ENCODE measurements at regions of chr1 and their contacts with region 1.

Region 1: GRCh38 chr1:198234520-198235251 is 77.9 kb downstream of the NEK7 start:
- DNase-seq: peak; percentile 62
- H3K4me3 Mint-ChIP-seq: peak overlapping the region; percentile 70
- H3K27ac Mint-ChIP-seq: no peak overlapping the region
- H3K4me1 Mint-ChIP-seq: peaks cover 29% of the 10 kb centered on the region
- H3K27me3 Mint-ChIP-seq: no peaks in the 10 kb centered on the region
- CTCF ChIP-seq: no peak

Region 2: GRCh38 chr1:197984289-197984688 is 250.4 kb before region 1 on chr1:
- CTCF ChIA-PET with region 1: no interaction called
- POLR2A ChIA-PET with region 1: no interaction called
- intact Hi-C with region 1: no loop called
- DNase-seq: no peak
- H3K4me3 Mint-ChIP-seq: no peak overlapping the region
- H3K27ac Mint-ChIP-seq: no peak overlapping the region
- H3K4me1 Mint-ChIP-seq: no peaks in the 10 kb centered on the region
- H3K27me3 Mint-ChIP-seq: no peaks in the 10 kb centered on the region
- CTCF ChIP-seq: no peak

Region 3: DNA sequence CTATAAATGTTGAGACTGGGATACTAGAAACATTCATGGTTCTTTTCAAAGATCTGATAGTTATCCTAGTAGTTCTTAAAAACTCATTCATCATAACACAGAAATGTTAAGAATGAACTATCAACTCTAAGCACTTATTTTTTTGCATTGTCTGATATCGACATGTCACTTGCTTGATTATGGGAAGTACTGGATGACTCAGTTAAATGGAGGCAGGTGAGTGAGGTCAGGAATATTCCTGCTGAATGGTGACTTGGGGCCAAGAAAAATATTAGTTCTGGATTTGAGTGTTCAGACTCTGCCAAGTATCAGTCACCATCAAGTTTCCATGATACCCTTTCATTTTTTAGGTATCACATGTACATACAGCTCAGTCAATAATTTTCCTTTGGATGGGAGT is 14.3 kb before region 1 on chr1:
- CTCF ChIA-PET with region 1: interaction called, 3 read pairs
- POLR2A ChIA-PET with region 1: interaction called, 26 read pairs
- intact Hi-C with region 1: no loop called
- DNase-seq: peak; percentile 97
- H3K4me3 Mint-ChIP-seq: peak overlapping the region; percentile 15
- H3K27ac Mint-ChIP-seq: peak overlapping the region; percentile 79
- H3K4me1 Mint-ChIP-seq: peaks cover 28% of the 10 kb centered on the region
- H3K27me3 Mint-ChIP-seq: no peaks in the 10 kb centered on the region
- CTCF ChIP-seq: no peak

Region 4: DNA sequence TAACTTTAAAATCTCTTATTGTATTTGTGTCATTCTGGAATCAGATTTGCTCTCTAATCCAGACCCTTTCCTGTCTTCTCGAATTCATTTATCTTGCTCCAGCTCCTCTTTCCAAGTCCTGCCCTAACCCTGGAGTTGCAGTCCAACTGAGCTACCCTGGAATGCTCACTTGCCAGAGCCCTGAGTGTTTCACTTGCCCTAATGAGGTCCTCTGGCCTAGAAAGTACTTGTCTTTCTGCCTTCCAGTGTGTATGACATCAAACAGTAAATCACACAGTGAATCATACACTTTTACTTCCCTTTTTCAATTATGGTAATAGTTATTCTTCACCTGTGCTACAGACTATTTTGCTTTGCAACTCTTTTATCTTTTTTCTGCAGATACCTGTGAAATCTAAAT is 19.0 kb after region 1 on chr1:
- CTCF ChIA-PET with region 1: interaction called, 4 read pairs
- POLR2A ChIA-PET with region 1: interaction called, 12 read pairs
- intact Hi-C with region 1: no loop called
- DNase-seq: peak; percentile 46
- H3K4me3 Mint-ChIP-seq: peak overlapping the region; percentile 2
- H3K27ac Mint-ChIP-seq: peak overlapping the region; percentile 77
- H3K4me1 Mint-ChIP-seq: peaks cover 16% of the 10 kb centered on the region
- H3K27me3 Mint-ChIP-seq: no peaks in the 10 kb centered on the region
- CTCF ChIP-seq: no peak

Region 5: GRCh38 chr1:198443374-198444233 is 208.9 kb after region 1 on chr1:
- CTCF ChIA-PET with region 1: interaction called, 4 read pairs
- POLR2A ChIA-PET with region 1: interaction called, 14 read pairs
- intact Hi-C with region 1: no loop called
- DNase-seq: peak; percentile 99
- H3K4me3 Mint-ChIP-seq: peak overlapping the region; percentile 32
- H3K27ac Mint-ChIP-seq: peak overlapping the region; percentile 85
- H3K4me1 Mint-ChIP-seq: peaks cover 23% of the 10 kb centered on the region
- H3K27me3 Mint-ChIP-seq: no peaks in the 10 kb centered on the region
- CTCF ChIP-seq: no peak

Region 6: DNA sequence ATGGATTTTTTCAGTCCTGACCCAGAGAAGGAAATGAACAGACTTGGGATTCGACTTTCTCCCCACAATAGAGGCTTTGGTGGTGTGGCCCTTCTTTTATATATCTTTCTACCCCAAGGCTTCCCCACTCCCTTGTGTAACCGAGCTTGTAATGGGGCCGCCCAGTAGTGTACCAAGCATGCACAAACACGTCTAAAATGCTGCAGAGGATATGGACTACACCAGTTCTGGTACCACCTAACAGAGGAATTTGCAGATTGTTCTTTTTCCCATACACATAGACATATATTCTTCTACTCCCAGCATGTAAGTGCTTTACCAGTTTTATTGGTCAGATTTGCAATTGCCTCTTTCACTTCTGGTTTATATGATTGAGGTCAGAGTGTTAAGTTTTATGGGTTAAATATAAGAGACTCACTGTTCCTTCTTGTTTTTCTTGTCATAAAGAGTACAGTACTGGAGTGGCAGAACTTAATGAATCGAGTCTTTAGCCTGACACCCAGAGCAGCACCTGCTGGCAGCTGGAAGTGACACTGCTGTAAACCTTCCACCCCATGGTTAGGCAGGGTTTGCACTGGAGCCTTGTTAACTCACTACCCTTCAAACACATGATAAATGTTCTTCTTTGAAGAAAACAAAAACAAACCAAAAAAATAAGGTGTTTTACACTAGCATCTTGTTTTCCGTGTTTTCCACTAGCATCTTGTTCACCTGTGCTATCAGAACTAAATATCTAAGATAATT is 602.8 kb after region 1 on chr1:
- CTCF ChIA-PET with region 1: no interaction called
- POLR2A ChIA-PET with region 1: no interaction called
- intact Hi-C with region 1: no loop called
- DNase-seq: peak; percentile 34
- H3K4me3 Mint-ChIP-seq: no peak overlapping the region
- H3K27ac Mint-ChIP-seq: peak overlapping the region; percentile 56
- H3K4me1 Mint-ChIP-seq: peaks cover 23% of the 10 kb centered on the region
- H3K27me3 Mint-ChIP-seq: no peaks in the 10 kb centered on the region
- CTCF ChIP-seq: no peak

Measured in MCF 10A (cell line).